CD4-positive, alpha-beta T cell (primary cell): ENCODE measurements at regions of chr4 and their contacts with region 1.

Region 1: DNA sequence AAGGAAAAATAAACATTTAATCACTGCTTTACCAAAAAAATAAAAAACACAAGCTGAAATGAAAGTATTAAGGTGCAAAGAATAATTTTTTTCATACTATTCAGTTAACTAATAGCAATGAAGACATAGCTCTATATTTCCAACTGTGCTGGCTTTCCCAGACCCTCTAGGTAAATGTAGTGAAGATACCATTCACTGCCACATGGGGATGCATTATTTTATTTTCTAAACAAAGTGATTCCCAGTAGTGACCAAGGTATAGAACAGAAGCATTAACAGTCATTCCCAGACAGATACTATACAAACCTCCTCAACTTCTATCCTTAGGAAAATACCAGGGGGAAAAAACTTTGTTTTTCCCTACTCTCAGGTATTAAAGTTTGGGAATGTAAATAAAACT is 39.4 kb downstream of the ANTXR2 start:
- DNase-seq: no peak
- ATAC-seq: no peak
- H3K4me3 ChIP-seq: no peak overlapping the region
- H3K4me3 Mint-ChIP-seq: no peak overlapping the region
- H3K27ac ChIP-seq: no peak overlapping the region
- H3K27ac Mint-ChIP-seq: no peak overlapping the region
- H3K4me1 ChIP-seq: peaks cover 12% of the 10 kb centered on the region
- H3K4me1 Mint-ChIP-seq: peaks cover 23% of the 10 kb centered on the region
- H3K27me3 ChIP-seq: no peaks in the 10 kb centered on the region
- H3K27me3 Mint-ChIP-seq: no peaks in the 10 kb centered on the region
- CTCF ChIP-seq: no peak

Region 2: DNA sequence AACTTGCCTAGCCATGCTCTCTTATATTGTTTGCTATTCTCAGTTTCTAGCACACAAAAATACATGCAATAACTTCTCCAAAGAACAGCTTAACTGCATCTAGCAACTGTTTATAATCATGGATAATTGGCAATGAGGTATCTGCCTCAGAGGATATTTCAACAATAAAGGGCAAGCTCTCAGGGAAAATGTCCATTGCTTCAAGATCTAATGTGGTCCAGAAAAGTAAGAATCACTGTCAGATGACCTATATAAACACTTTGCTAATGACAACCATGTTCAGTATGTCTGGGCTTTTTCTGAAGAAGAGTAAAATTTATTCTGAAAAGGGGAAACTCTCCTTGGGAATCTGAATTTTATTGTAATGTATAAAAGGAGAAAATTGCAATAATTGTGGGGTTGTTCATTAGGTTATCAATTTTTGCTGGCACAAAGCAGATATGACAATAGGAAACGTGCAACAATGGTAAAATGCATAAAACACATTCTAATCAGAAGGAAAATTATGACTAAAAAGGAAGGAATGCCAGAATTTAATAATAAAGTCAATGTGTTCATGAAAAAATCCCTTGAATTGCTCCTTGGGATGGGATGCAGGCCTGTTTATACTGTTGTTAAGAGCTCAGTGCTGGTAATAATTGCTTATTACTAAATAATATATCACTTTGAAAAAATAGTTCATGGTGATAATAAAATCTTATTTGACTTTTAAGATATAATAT is 50.8 kb before region 1 on chr4:
- CTCF ChIA-PET with region 1: interaction called, 3 read pairs
- POLR2A ChIA-PET with region 1: no interaction called
- intact Hi-C with region 1: loop called in 1 of 2 experiments (anchors 5 kb)
- DNase-seq: no peak
- ATAC-seq: no peak
- H3K4me3 ChIP-seq: no peak overlapping the region
- H3K4me3 Mint-ChIP-seq: no peak overlapping the region
- H3K27ac ChIP-seq: no peak overlapping the region
- H3K27ac Mint-ChIP-seq: no peak overlapping the region
- H3K4me1 ChIP-seq: no peaks in the 10 kb centered on the region
- H3K4me1 Mint-ChIP-seq: peaks cover 12% of the 10 kb centered on the region
- H3K27me3 ChIP-seq: no peaks in the 10 kb centered on the region
- H3K27me3 Mint-ChIP-seq: no peaks in the 10 kb centered on the region
- CTCF ChIP-seq: no peak

Region 3: DNA sequence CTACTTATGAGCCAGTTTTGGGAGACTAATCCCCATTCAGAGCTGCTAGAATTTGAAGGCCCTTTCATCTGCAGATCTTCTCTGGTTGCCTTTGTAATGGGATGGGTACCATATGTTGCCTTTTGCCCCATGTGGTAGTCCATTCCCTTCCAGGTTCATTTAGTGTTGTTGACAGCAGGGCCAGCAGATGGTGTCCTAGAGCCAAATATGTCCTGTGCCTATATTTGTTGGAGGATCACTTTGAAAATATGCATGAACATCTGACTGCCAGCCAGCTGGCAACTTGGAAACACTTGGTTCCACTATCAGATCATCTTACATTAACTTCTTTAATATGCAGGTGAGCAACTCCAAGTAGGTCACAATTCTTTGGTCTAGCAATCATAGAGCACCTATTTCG is 332.3 kb after region 1 on chr4:
- CTCF ChIA-PET with region 1: no interaction called
- POLR2A ChIA-PET with region 1: no interaction called
- intact Hi-C with region 1: no loop called
- DNase-seq: peak; percentile 31 to 75 (median 48)
- ATAC-seq: peak; percentile 79
- H3K4me3 ChIP-seq: no peak overlapping the region
- H3K4me3 Mint-ChIP-seq: no peak overlapping the region
- H3K27ac ChIP-seq: no peak overlapping the region
- H3K27ac Mint-ChIP-seq: no peak overlapping the region
- H3K4me1 ChIP-seq: peaks cover 3% of the 10 kb centered on the region
- H3K4me1 Mint-ChIP-seq: peaks cover 10% of the 10 kb centered on the region
- H3K27me3 ChIP-seq: no peaks in the 10 kb centered on the region
- H3K27me3 Mint-ChIP-seq: no peaks in the 10 kb centered on the region
- CTCF ChIP-seq: peak; percentile 73